GM12878 (cell line): ENCODE measurements at regions of chr2 and their contacts with region 1.

Region 1: GRCh38 chr2:74147727-74148456 is at the start of gene BOLA3:
- DNase-seq: peak; percentile 32
- ATAC-seq: peak; percentile 97
- H3K4me3 ChIP-seq: peak within 1 kb of the TSS; percentile 89
- H3K27ac ChIP-seq: peak within 1 kb of the TSS; percentile 60
- H3K4me1 ChIP-seq: peaks cover 7% of the 10 kb centered on the region
- H3K27me3 ChIP-seq: no peaks in the 10 kb centered on the region
- CTCF ChIP-seq: peak; percentile 66 to 88 (median 67)
- EP300 ChIP-seq: no peak
- POLR2A ChIP-seq: peak; percentile 89
- RAD21 ChIP-seq: peak; percentile 48
- polyA plus RNA-seq, gene BOLA3: 164 to 168 TPM

Region 2: DNA sequence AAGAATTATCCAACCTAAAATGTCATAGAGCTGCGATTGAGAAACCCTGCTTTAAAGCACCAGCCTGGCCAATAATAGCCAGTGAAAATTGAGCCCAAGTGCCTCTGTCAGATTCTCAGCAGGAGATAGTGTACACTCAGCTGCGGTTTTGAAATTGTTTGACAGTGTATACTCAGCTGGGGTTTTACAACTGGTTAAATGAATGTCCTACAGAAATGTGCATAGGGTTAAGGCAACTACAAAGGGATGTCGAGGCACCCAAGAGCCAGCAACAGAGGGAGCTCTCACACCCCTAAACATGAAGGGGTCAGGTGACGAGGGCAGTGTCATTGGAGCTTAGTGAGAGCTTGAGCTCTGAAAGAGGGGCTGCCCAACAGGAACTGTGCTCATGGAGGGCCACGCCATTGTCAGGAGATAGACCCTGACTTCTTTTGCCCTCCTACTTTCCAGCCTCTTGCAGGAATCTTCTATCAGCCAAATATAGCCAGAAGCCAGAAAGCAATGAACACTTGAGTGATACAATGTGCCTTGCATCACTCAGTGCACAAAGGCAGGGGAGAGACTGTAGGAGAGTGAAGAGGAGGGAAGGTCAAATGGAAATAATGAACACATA is 239.9 kb before region 1 on chr2:
- CTCF ChIA-PET with region 1: interaction called, 17 read pairs
- POLR2A ChIA-PET with region 1: interaction called, 3 read pairs
- RAD21 ChIA-PET with region 1: interaction called, 18 read pairs
- SMC1A ChIA-PET with region 1: interaction called, 9 read pairs
- in situ Hi-C with region 1: no loop called
- intact Hi-C with region 1: loop called (anchors 5 kb)
- DNase-seq: peak; percentile 26
- ATAC-seq: peak; percentile 99
- H3K4me3 ChIP-seq: no peak overlapping the region
- H3K27ac ChIP-seq: no peak overlapping the region
- H3K4me1 ChIP-seq: no peaks in the 10 kb centered on the region
- H3K27me3 ChIP-seq: no peaks in the 10 kb centered on the region
- CTCF ChIP-seq: peak; percentile 58 to 76 (median 62)
- EP300 ChIP-seq: no peak
- POLR2A ChIP-seq: no peak
- RAD21 ChIP-seq: peak; percentile 83

Region 3: GRCh38 chr2:74097574-74097973 is 50.3 kb before region 1 on chr2:
- CTCF ChIA-PET with region 1: no interaction called
- POLR2A ChIA-PET with region 1: no interaction called
- RAD21 ChIA-PET with region 1: no interaction called
- SMC1A ChIA-PET with region 1: no interaction called
- in situ Hi-C with region 1: no loop called
- intact Hi-C with region 1: no loop called
- DNase-seq: no peak
- ATAC-seq: no peak
- H3K4me3 ChIP-seq: no peak overlapping the region
- H3K27ac ChIP-seq: no peak overlapping the region
- H3K4me1 ChIP-seq: no peaks in the 10 kb centered on the region
- H3K27me3 ChIP-seq: no peaks in the 10 kb centered on the region
- CTCF ChIP-seq: no peak
- EP300 ChIP-seq: no peak
- POLR2A ChIP-seq: no peak
- RAD21 ChIP-seq: no peak

Region 4: GRCh38 chr2:74162951-74163350 is 15.1 kb after region 1 on chr2:
- CTCF ChIA-PET with region 1: interaction called, 31 read pairs
- POLR2A ChIA-PET with region 1: no interaction called
- RAD21 ChIA-PET with region 1: interaction called, 3 read pairs
- SMC1A ChIA-PET with region 1: interaction called, 15 read pairs
- in situ Hi-C with region 1: no loop called
- intact Hi-C with region 1: no loop called
- DNase-seq: no peak
- ATAC-seq: no peak
- H3K4me3 ChIP-seq: no peak overlapping the region
- H3K27ac ChIP-seq: no peak overlapping the region
- H3K4me1 ChIP-seq: no peaks in the 10 kb centered on the region
- H3K27me3 ChIP-seq: no peaks in the 10 kb centered on the region
- CTCF ChIP-seq: no peak
- EP300 ChIP-seq: no peak
- POLR2A ChIP-seq: no peak
- RAD21 ChIP-seq: no peak

Region 5: GRCh38 chr2:74178201-74179062 is 30.5 kb after region 1 on chr2 and contains the start of gene MOB1A:
- CTCF ChIA-PET with region 1: interaction called, 11 read pairs
- POLR2A ChIA-PET with region 1: interaction called, 11 read pairs
- RAD21 ChIA-PET with region 1: interaction called, 17 read pairs
- SMC1A ChIA-PET with region 1: interaction called, 8 read pairs
- in situ Hi-C with region 1: no loop called
- intact Hi-C with region 1: no loop called
- DNase-seq: peak; percentile 98
- ATAC-seq: peak; percentile 86
- H3K4me3 ChIP-seq: peak within 1 kb of the TSS; percentile 98
- H3K27ac ChIP-seq: peak within 1 kb of the TSS; percentile 96
- H3K4me1 ChIP-seq: peaks cover 30% of the 10 kb centered on the region
- H3K27me3 ChIP-seq: no peaks in the 10 kb centered on the region
- CTCF ChIP-seq: no peak
- EP300 ChIP-seq: 0 out of 4 replicates have a peak, but pooled peaks of 1 of the 2 experiments have one; percentile 17
- POLR2A ChIP-seq: peak; percentile 94
- RAD21 ChIP-seq: no peak
- polyA plus RNA-seq, gene MOB1A: 41.2 to 58.5 TPM

Region 6: GRCh38 chr2:74206180-74206688 is 58.3 kb after region 1 on chr2:
- CTCF ChIA-PET with region 1: interaction called, 49 read pairs
- POLR2A ChIA-PET with region 1: no interaction called
- RAD21 ChIA-PET with region 1: interaction called, 12 read pairs
- SMC1A ChIA-PET with region 1: interaction called, 20 read pairs
- in situ Hi-C with region 1: no loop called
- intact Hi-C with region 1: no loop called
- DNase-seq: peak; percentile 61
- ATAC-seq: peak; percentile 87
- H3K4me3 ChIP-seq: peak overlapping the region; percentile 11; the same call in 1 of the 2 replicates
- H3K27ac ChIP-seq: peak overlapping the region; percentile 26
- H3K4me1 ChIP-seq: peaks cover 24% of the 10 kb centered on the region
- H3K27me3 ChIP-seq: no peaks in the 10 kb centered on the region
- CTCF ChIP-seq: no peak
- EP300 ChIP-seq: 0 out of 4 replicates have a peak, but pooled peaks have one; percentile 48 to 49
- POLR2A ChIP-seq: peak; percentile 65
- RAD21 ChIP-seq: peak; percentile 16; the same call in 1 of the 2 replicates

Region 7: GRCh38 chr2:74364533-74365505 is 216.9 kb after region 1 on chr2:
- CTCF ChIA-PET with region 1: no interaction called
- POLR2A ChIA-PET with region 1: no interaction called
- RAD21 ChIA-PET with region 1: no interaction called
- SMC1A ChIA-PET with region 1: no interaction called
- in situ Hi-C with region 1: no loop called
- intact Hi-C with region 1: no loop called
- DNase-seq: no peak
- ATAC-seq: no peak
- H3K4me3 ChIP-seq: no peak overlapping the region
- H3K27ac ChIP-seq: no peak overlapping the region
- H3K4me1 ChIP-seq: no peaks in the 10 kb centered on the region
- H3K27me3 ChIP-seq: no peaks in the 10 kb centered on the region
- CTCF ChIP-seq: no peak
- EP300 ChIP-seq: no peak
- POLR2A ChIP-seq: no peak
- RAD21 ChIP-seq: no peak

Region 8: DNA sequence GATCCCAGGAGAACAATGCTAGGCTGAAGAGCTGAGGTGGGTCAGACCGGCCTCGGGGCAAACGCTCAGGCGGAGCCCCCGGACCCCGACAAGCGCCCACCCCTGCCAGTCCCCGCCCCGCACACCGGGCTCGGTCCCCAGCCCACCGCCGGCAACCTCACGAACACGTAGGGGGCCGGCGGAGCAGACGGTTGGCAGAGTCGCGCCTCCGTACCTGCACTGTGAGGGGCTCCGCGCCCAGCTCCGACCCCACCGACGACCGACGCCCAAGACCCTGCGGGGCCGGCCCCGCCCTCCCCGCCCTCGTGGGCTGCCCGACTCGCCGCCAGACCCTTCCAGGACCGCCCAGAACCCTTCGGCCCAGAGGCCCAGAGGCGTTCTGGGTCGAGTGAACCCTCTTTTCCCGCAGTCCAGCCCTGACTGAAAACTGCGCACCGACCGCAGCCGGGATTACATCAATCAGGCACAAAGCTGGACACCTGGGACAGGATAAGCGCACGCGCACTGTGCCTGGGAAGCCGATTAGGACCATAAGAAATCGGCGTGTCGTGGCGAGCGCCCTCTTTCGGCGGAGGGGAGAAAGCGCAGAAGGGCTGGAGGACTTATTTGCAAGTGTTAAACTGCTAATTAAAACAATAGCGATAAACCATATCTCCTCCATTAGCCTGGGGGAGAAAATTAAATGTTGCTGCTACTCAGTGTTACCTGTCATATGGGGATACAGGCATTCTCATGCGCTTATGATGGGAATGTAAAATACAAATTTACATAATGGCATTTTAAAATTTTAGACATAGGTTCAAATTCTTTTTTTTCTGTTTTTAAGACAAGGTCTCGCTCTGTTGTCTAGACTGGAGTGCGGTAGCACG is 243.9 kb after region 1 on chr2:
- CTCF ChIA-PET with region 1: no interaction called
- POLR2A ChIA-PET with region 1: no interaction called
- RAD21 ChIA-PET with region 1: no interaction called
- SMC1A ChIA-PET with region 1: no interaction called
- in situ Hi-C with region 1: no loop called
- intact Hi-C with region 1: loop called (anchors 10 kb)
- DNase-seq: peak; percentile 76
- ATAC-seq: peak; percentile 89
- H3K4me3 ChIP-seq: peak overlapping the region; percentile 88
- H3K27ac ChIP-seq: peak overlapping the region; percentile 98
- H3K4me1 ChIP-seq: peaks cover 3% of the 10 kb centered on the region; the same call in 1 of the 2 replicates
- H3K27me3 ChIP-seq: no peaks in the 10 kb centered on the region
- CTCF ChIP-seq: peak; percentile 97 to 99 (median 98); a peak in 5 of 6 replicates
- EP300 ChIP-seq: no peak
- POLR2A ChIP-seq: peak; percentile 83
- RAD21 ChIP-seq: peak; percentile 59

Region 9: DNA sequence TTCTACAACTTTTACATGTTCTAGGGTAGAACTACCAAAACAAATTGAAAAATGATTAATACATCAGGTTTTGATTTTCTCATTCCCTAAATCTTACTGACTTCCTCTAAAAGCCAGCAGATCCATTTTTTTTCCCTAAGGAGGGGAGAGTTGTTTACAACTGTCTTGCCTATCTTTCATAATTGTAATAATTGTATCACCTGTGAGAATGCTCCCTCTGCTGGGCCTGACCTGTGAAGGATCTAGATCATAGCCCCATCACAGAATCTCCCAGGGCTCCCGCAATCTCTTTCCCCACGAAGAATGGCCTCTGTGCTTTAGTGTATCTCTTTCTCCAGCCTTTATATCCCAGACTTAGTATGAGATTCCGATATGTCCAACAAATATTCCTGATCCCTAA is 396.7 kb after region 1 on chr2:
- CTCF ChIA-PET with region 1: no interaction called
- POLR2A ChIA-PET with region 1: no interaction called
- RAD21 ChIA-PET with region 1: no interaction called
- SMC1A ChIA-PET with region 1: no interaction called
- in situ Hi-C with region 1: no loop called
- intact Hi-C with region 1: no loop called
- DNase-seq: no peak
- ATAC-seq: no peak
- H3K4me3 ChIP-seq: no peak overlapping the region
- H3K27ac ChIP-seq: no peak overlapping the region
- H3K4me1 ChIP-seq: peaks cover 12% of the 10 kb centered on the region
- H3K27me3 ChIP-seq: no peaks in the 10 kb centered on the region
- CTCF ChIP-seq: peak; percentile 33 to 41 (median 39); a peak in 4 of 6 replicates
- EP300 ChIP-seq: no peak
- POLR2A ChIP-seq: no peak
- RAD21 ChIP-seq: peak; percentile 46; the same call in 1 of the 2 replicates